Left cardiac atrium (tissue), 4 donors: ENCODE measurements at regions of chr11 and their contacts with region 1.

Region 1: DNA sequence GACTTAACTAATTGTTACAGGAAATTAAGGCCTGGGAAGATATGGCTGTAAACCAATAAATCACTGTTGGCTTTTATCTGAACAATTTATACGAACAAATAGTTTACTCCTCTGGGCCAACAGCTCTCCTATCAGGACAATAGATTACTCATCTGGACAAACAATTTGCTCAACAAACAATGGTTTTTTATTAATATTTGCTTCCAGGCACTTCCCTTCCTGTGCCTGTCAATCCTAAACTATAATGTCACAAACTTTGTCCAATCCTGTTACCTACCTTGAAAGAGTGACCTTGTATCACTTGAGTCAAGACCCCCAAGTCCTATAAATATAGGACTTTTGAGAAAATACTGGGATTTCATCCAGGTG is 87.6 kb upstream of the OR9Q1 start:
- DNase-seq: no peak
- ATAC-seq: no peak

Region 2: GRCh38 chr11:57974848-57975601 is 39.0 kb after region 1 on chr11:
- intact Hi-C with region 1: no loop called
- DNase-seq: no peak
- ATAC-seq: peak; percentile 34

Region 3: GRCh38 chr11:58004664-58005063 is 68.6 kb after region 1 on chr11:
- intact Hi-C with region 1: loop called in 1 of 2 experiments (anchors 2 kb)
- DNase-seq: no peak
- ATAC-seq: peak; percentile 63 to 76

Region 4: DNA sequence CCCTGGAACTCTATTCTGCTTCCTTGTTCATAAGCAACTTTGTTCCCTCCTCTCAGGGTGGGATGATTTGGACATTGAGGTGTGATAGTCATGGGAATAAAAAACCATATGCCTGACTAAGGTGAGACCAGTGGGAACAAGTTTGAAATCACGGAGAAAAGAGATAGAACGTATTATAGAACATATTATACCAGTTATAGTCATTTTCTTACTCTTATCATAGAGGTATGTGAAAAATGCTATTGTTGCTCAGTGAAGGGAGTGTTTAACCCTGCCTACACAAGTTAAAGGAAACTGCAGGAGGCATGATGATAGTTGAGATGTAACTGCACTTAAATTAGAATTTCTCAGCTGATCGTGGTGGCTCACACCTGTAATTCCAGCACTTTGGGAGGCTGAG is 110.2 kb after region 1 on chr11:
- intact Hi-C with region 1: no loop called
- DNase-seq: no peak
- ATAC-seq: no peak